ENCODE measurements at regions of chr1 and their contacts with region 1.

Region 1: DNA sequence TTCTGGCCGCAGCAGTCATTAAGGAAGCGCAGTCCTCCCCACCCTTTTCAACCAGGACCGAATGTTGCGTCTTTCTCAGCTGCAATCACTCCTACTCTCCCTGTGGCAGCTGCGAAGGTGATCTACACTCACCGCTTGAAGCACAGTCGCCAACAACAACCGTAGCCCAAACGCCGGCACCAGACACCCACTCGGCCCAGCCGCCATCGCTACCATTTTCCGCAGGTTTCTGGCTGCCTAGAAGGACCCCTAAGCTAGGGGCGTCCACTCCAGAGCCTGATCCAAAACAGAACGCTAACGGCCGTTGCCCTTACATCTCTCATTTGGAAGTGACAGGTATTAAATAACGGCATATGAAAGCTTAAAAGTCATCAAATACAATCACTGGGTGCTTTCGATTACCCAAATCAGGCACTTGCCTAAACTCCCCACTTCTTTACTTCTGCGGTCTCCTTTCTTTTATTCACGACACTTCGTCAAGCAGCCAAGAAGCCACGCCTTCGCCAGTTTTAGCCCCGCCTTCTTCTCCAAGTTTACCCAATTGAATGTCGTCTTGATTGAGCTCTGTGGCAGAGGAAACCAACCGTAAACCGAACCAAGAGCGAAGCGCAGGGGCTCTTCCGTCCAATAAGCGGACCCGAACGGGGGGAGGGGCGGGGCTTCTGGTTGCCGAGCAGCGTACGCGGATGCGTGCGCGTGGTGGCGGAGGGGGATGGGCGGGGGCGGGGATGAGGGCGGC is at the start of gene SELENOF:
- DNase-seq: peak; percentile 94 to 100 (median 99)
- ATAC-seq: peak; percentile 93
- H3K4me3 ChIP-seq: peak within 1 kb of the TSS; percentile 96
- H3K4me3 Mint-ChIP-seq: no peak within 1 kb of the TSS
- H3K27ac ChIP-seq: peak within 1 kb of the TSS; percentile 89
- H3K27ac Mint-ChIP-seq: no peak within 1 kb of the TSS
- H3K4me1 ChIP-seq: peaks cover 15 to 32% of the 10 kb centered on the region in 2 donors
- H3K4me1 Mint-ChIP-seq: peaks cover 6 to 50% (median 43%) of the 10 kb centered on the region in 7 donors
- H3K27me3 ChIP-seq: no peaks in the 10 kb centered on the region
- H3K27me3 Mint-ChIP-seq: no peaks in the 10 kb centered on the region
- total RNA-seq, gene SELENOF: 109 to 196 (median 133) TPM

Region 2: GRCh38 chr1:85061711-85062424 is 1852.2 kb before region 1 on chr1:
- CTCF ChIA-PET with region 1: no interaction called
- POLR2A ChIA-PET with region 1: no interaction called
- intact Hi-C with region 1: loop called in 1 of 2 experiments (anchors 10 kb)
- DNase-seq: peak; percentile 49 to 93 (median 86)
- ATAC-seq: peak; percentile 99
- H3K4me3 ChIP-seq: peak overlapping the region; percentile 57
- H3K4me3 Mint-ChIP-seq: peak overlapping the region; percentile 79 to 93 (median 88)
- H3K27ac ChIP-seq: peak overlapping the region; percentile 24
- H3K27ac Mint-ChIP-seq: peak overlapping the region; percentile 57 to 96 (median 92)
- H3K4me1 ChIP-seq: peaks cover 4 to 6% of the 10 kb centered on the region in 2 donors
- H3K4me1 Mint-ChIP-seq: peaks cover 11 to 21% (median 14%) of the 10 kb centered on the region in 7 donors
- H3K27me3 ChIP-seq: no peaks in the 10 kb centered on the region
- H3K27me3 Mint-ChIP-seq: peaks cover 3 to 39% (median 13%) of the 10 kb centered on the region in 5 donors

Region 3: DNA sequence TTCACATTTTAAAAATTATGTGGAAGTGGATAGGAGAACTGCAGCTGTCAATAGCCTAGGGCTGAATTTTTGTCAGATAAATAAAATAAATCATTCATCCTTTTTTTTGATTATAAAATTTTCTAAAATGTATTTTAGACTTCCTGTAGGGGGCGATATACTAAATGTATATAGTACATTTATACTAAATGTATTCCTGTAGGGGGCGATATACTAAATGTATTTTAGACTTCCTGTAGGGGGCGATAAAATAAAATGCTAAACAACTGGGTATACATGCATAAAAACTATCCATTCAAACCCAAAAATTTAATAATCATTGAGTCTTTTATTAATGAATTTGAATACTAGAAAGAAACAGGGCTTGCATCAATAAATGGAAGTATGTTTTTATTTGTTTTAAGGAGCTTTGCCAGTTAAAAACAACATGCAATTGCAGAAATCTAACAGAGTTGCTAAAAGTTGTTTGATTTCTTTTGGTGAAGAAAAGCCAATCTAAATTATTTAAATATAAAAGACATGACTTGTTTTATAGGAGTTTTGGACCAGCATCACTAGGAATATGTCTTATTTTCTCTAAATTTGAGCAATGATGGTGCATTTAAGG is 414.0 kb before region 1 on chr1:
- CTCF ChIA-PET with region 1: no interaction called
- POLR2A ChIA-PET with region 1: no interaction called
- intact Hi-C with region 1: loop called (anchors 1 to 5 kb)
- DNase-seq: peak in 6 of 9 donors; percentile 55 to 76 (median 73)
- ATAC-seq: peak; percentile 92
- H3K4me3 ChIP-seq: no peak overlapping the region
- H3K4me3 Mint-ChIP-seq: no peak overlapping the region
- H3K27ac ChIP-seq: no peak overlapping the region
- H3K27ac Mint-ChIP-seq: no peak overlapping the region
- H3K4me1 ChIP-seq: peaks cover 0 to 8% of the 10 kb centered on the region in 2 donors
- H3K4me1 Mint-ChIP-seq: peaks cover 0 to 18% (median 10%) of the 10 kb centered on the region in 7 donors
- H3K27me3 ChIP-seq: no peaks in the 10 kb centered on the region
- H3K27me3 Mint-ChIP-seq: peaks cover 6 to 46% (median 14%) of the 10 kb centered on the region in 5 donors

Region 4: DNA sequence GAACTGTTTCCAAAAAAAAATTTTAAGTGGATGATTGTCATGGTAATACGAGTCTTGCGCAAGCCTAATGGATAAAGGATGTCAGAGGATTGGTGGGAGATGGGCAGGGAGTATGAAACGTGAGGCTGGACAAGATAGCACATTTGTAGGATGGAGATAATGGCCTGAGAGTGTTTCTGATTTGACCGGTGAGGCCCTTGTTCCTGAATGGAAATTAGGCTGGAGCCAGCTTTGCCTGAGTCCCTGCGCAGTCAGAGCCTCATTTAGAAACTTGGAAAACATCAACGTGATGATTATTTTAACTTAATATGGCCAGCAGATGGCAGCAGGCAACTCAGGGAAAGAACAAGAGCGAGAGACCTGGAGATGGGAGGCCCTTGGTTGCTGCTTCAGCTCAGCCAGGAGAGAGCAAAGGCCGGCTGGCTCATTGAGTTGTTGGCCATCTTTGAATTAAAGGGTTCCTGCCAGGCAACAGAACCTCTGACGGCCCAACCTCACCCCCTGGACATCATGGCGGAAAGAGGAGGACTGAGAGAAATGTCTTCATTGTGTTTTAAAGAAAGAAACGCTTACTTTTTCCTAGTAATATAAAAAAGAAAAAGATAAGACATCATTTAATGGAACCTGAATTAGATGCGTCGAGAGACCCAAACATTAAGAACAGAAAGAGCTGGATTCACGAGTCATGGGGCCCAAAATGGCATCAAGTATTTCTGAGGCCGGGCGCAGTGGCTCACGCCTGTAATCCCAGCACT is 80.4 kb before region 1 on chr1:
- CTCF ChIA-PET with region 1: no interaction called
- POLR2A ChIA-PET with region 1: no interaction called
- intact Hi-C with region 1: loop called in 1 of 2 experiments (anchors 5 kb)
- DNase-seq: peak; percentile 9 to 69 (median 60)
- ATAC-seq: peak; percentile 84
- H3K4me3 ChIP-seq: no peak overlapping the region
- H3K4me3 Mint-ChIP-seq: no peak overlapping the region
- H3K27ac ChIP-seq: no peak overlapping the region
- H3K27ac Mint-ChIP-seq: no peak overlapping the region
- H3K4me1 ChIP-seq: no peaks in the 10 kb centered on the region
- H3K4me1 Mint-ChIP-seq: peaks cover 0 to 7% (median 0%) of the 10 kb centered on the region in 7 donors
- H3K27me3 ChIP-seq: no peaks in the 10 kb centered on the region
- H3K27me3 Mint-ChIP-seq: peaks cover 0 to 7% (median 0%) of the 10 kb centered on the region in 5 donors

Region 5: DNA sequence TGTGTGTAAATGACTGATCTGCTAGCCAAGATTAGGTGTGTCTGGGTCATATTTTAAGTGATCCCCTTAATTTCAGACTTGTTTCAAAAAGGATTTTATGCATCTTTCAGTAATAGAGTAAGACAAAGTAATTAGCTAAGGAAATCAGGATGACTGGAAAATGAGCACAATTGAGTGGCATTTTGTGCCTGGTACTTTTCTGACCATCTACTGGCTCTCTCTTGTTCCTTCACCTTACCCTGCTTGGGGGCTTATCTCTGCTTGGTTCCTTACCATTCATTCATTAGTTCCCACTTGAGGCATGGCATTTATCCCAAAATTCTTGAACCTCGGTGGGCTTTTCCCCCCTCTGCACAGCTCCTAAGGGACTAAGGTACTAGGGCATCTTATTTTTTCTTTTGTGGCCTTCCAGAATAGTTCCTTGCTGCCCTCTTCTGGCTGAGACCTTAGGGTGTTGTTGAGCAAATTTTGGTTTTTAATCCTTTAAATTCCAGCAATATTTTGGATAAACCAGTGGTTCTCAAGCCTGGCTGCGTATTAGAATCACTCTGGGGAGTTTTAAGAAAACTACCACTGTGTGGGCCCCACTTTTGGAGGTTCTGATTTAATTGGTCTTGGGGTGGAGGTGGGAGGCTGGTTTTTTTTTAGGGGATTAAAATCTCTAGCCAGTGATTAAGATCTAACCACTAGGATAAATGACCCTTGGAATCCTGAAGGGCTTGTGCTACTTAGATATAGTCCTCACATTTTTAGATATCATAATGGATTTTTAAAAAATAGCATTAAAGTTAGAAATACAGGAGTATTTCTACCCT is 51.2 kb after region 1 on chr1:
- CTCF ChIA-PET with region 1: interaction called, 6 read pairs
- POLR2A ChIA-PET with region 1: no interaction called
- intact Hi-C with region 1: loop called (anchors 1 to 2 kb)
- DNase-seq: peak in 6 of 9 donors; percentile 1 to 31 (median 15)
- ATAC-seq: peak; percentile 48
- H3K4me3 ChIP-seq: no peak overlapping the region
- H3K4me3 Mint-ChIP-seq: peak overlapping the region in 1 of 10 donors; percentile 36
- H3K27ac ChIP-seq: no peak overlapping the region
- H3K27ac Mint-ChIP-seq: peak overlapping the region in 3 of 9 donors; percentile 56 to 69 (median 59)
- H3K4me1 ChIP-seq: no peaks in the 10 kb centered on the region
- H3K4me1 Mint-ChIP-seq: peaks cover 0 to 5% (median 0%) of the 10 kb centered on the region in 7 donors
- H3K27me3 ChIP-seq: no peaks in the 10 kb centered on the region
- H3K27me3 Mint-ChIP-seq: no peaks in the 10 kb centered on the region

Region 6: DNA sequence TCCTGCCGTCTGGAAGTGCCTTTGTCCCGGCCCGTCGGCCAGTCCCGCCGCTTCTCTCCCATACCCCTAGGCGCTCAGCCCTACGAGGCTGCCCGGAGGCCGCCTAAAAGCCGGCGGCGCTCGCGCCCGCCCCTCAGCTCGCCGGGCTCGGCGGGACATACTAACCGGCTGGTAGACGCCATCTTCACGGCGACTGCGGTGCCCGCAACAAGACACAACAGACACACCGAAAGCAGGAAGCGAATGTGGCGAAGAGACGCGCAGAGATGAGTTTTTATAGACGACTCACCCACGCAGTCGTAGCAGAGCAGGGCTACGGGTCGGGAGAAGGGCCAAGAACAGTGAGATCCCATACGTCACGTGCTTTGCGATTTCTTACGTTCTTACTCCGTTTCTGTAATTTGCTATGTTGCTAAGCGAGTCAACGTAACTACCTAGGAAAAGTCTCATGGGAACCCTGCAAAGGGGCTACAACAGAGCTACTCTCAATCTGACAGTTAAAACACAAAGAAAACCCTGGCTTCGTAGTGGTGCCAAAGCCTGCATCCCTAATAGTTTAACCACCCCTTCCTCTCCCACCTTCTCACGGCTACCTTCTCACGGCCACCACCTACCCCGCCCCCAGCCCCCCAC is 1977.4 kb after region 1 on chr1 and contains the start of gene GTF2B:
- CTCF ChIA-PET with region 1: no interaction called
- POLR2A ChIA-PET with region 1: interaction called, 3 read pairs
- intact Hi-C with region 1: loop called in 1 of 2 experiments (anchors 1 kb)
- DNase-seq: peak; percentile 86 to 96 (median 94)
- ATAC-seq: peak; percentile 97
- H3K4me3 ChIP-seq: peak within 1 kb of the TSS; percentile 86
- H3K4me3 Mint-ChIP-seq: peak within 1 kb of the TSS; percentile 87 to 99 (median 95)
- H3K27ac ChIP-seq: peak within 1 kb of the TSS; percentile 91
- H3K27ac Mint-ChIP-seq: peak within 1 kb of the TSS; percentile 93 to 98 (median 97)
- H3K4me1 ChIP-seq: peaks cover 26 to 27% of the 10 kb centered on the region in 2 donors
- H3K4me1 Mint-ChIP-seq: peaks cover 23 to 59% (median 48%) of the 10 kb centered on the region in 7 donors
- H3K27me3 ChIP-seq: no peaks in the 10 kb centered on the region
- H3K27me3 Mint-ChIP-seq: peaks cover 0 to 2% (median 0%) of the 10 kb centered on the region in 5 donors
- total RNA-seq, gene GTF2B: 41.3 to 53.6 (median 47.3) TPM

Measured in naive thymus-derived CD4-positive, alpha-beta T cell (primary cell).